Dorsolateral prefrontal cortex (tissue), 120 donors: ENCODE measurements at regions of chr18 and their contacts with region 1.

Region 1: GRCh38 chr18:3995476-3996102 is 459.5 kb downstream of the DLGAP1 start:
- DNase-seq: peak in 3 of 10 donors; percentile 36 to 62 (median 51)
- H3K4me3 ChIP-seq: peak overlapping the region in 57 of 59 donors; percentile 0 to 59 (median 38)
- H3K27ac ChIP-seq: peak overlapping the region in 29 of 59 donors; percentile 1 to 85 (median 66)
- H3K27me3 ChIP-seq: no peaks in the 10 kb centered on the region
- CTCF ChIP-seq: peak; percentile 77 to 95 (median 86)

Region 2: DNA sequence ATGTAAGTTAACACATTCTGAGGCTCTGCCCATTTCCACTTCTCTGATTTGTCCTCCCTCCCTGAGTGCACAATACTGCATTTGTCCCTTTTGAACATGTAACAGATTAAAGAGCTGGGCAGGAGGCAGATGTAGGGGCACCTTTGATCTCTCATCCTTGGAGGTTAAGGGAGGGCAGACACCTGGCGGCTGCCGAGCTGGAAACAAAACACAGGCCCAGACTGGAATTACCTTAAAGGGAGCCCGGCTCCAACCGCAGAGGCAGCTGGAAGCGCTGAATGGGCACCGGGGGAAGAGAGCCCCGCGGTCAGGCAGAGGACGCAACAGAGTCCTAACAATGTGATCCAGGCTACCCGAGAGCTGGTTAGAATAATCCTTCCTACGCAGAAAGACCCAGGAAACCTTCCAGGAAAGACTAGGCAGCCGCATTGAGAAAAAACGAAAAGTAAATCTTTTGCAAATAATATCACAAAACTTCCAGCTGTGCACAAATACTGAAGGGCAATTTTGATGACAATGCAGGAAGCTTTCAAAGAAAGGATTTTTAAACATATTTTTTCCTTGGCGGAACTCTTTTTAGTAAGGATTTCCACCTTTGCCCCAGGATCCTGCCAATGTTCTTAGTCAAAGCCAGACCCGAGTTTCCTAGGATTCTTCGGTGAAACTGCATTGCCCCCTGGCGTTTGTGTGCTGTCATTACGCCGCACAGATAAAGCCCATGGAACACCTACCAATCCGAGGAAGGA is 329.6 kb before region 1 on chr18:
- intact Hi-C with region 1: loop called in 1 of 2 experiments (anchors 10 kb)
- DNase-seq: peak; percentile 76 to 89 (median 83)
- H3K4me3 ChIP-seq: peak overlapping the region in 57 of 59 donors; percentile 6 to 67 (median 42)
- H3K27ac ChIP-seq: peak overlapping the region in 47 of 59 donors; percentile 5 to 83 (median 55)
- H3K27me3 ChIP-seq: no peaks in the 10 kb centered on the region
- CTCF ChIP-seq: peak; percentile 90 to 99 (median 97)

Region 3: DNA sequence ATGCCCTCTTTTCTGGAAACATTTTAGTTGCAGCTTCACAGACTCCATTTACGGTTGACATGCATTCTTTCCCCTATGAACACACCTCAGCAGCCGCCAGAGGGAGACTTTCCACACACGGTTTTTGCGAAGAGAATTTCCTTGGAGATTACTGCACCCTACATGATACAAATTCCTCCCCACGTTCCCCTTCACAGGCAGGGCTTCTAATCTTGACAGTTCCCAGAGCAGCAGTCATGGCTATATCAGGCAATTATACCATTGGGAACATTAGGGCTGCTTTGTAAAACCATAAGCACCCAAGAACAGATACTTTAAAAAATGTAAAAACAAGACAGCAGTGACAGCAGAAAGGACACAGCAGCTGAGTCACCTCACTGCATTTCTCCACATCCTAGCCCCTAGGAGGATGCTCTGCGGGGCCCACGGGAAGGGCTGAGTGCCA is 291.8 kb before region 1 on chr18:
- intact Hi-C with region 1: loop called (anchors 5 to 10 kb)
- DNase-seq: peak; percentile 28 to 82 (median 72)
- H3K4me3 ChIP-seq: peak overlapping the region in 4 of 59 donors; percentile 14 to 30 (median 17)
- H3K27ac ChIP-seq: peak overlapping the region in 57 of 59 donors; percentile 3 to 89 (median 68)
- H3K27me3 ChIP-seq: no peaks in the 10 kb centered on the region
- CTCF ChIP-seq: peak; percentile 25 to 82 (median 68)

Region 4: GRCh38 chr18:3771121-3771971 is 224.2 kb before region 1 on chr18:
- intact Hi-C with region 1: loop called (anchors 2 kb)
- DNase-seq: peak; percentile 76 to 94 (median 84)
- H3K4me3 ChIP-seq: peak overlapping the region; percentile 15 to 71 (median 51)
- H3K27ac ChIP-seq: peak overlapping the region in 58 of 59 donors; percentile 23 to 89 (median 71)
- H3K27me3 ChIP-seq: no peaks in the 10 kb centered on the region
- CTCF ChIP-seq: peak; percentile 81 to 99 (median 96)

Region 5: GRCh38 chr18:3839481-3840075 is 156.0 kb before region 1 on chr18:
- intact Hi-C with region 1: loop called (anchors 10 kb)
- DNase-seq: peak in 5 of 10 donors; percentile 34 to 64 (median 57)
- H3K4me3 ChIP-seq: peak overlapping the region in 24 of 59 donors; percentile 1 to 68 (median 19)
- H3K27ac ChIP-seq: peak overlapping the region in 47 of 59 donors; percentile 5 to 86 (median 66)
- H3K27me3 ChIP-seq: peaks cover 0 to under 1% (median 0%) of the 10 kb centered on the region in 45 donors
- CTCF ChIP-seq: no peak

Region 6: DNA sequence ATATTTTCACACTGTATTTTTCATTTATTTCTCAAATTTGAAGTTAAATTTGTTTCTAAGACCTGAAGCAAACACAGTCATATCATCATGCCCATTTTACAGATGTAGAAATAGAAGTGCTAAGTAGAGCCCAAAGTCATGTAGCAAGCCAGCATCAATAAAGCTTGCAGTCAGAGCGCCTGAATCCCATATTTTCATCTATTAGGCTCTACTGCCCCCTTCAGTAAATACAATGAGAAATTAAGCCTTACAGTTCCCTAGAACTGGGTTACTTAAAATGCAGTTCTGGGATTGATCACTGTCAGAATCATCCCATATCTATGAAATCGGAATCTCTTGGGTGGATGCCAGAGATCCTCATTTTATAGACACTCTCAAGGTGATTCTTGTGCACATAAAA is 125.7 kb before region 1 on chr18:
- intact Hi-C with region 1: loop called (anchors 5 to 10 kb)
- DNase-seq: no peak
- H3K4me3 ChIP-seq: peak overlapping the region in 27 of 59 donors; percentile 8 to 70 (median 52)
- H3K27ac ChIP-seq: peak overlapping the region in 25 of 59 donors; percentile 5 to 89 (median 71)
- H3K27me3 ChIP-seq: peaks cover 0 to 6% (median 0%) of the 10 kb centered on the region in 45 donors
- CTCF ChIP-seq: peak in 55 of 56 donors; percentile 27 to 75 (median 54)